ENCODE measurements at regions of chr1 and their contacts with region 1.

Region 1: DNA sequence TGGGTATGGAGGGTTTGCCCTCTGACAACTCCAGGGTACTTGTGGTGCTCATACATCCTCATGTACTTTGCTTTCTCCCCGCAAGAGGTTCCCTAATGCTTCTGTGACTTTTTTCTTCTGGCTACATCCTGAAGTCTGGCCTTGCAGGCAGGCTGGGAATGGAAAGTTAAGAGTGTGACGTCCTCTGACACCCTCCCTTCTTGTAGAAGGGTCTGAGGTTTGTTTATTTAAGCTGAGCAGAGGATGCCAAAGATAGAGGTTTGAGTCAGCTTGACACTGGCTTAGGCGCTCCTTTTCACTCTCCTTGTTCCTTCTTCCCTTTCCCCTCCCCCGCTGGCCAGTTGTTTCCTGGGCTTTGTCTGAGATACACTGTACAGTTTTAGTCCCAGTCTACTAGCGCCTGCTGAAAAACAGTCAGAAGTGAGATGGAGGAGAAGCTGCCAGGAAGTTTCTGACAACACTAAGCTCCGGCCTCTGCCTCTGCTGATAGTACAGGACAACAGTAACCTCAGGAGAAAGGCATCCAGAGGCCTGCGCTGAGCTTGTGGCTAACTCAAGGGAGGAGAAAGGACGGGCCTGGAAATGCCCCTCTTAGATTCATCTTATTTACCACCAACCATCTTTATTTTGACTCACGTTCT is at the start of gene MACF1:
- DNase-seq: peak in 3 of 35 experiments; percentile 6 to 52 (median 39)
- ATAC-seq: peak; percentile 18 to 47 (median 36)
- H3K4me3 ChIP-seq: peak within 1 kb of the TSS; percentile 51 to 65
- H3K4me3 Mint-ChIP-seq: peak within 1 kb of the TSS; percentile 93
- H3K27ac ChIP-seq: peak within 1 kb of the TSS; percentile 82
- H3K27ac Mint-ChIP-seq: peak within 1 kb of the TSS; percentile 95 to 98
- H3K4me1 ChIP-seq: peaks cover 21 to 27% of the 10 kb centered on the region in 2 experiments
- H3K4me1 Mint-ChIP-seq: peaks cover 65 to 74% (median 67%) of the 10 kb centered on the region in 3 donors
- H3K27me3 ChIP-seq: no peaks in the 10 kb centered on the region
- H3K27me3 Mint-ChIP-seq: no peaks in the 10 kb centered on the region
- total RNA-seq, gene MACF1: 232 to 596 (median 258) TPM

Region 2: DNA sequence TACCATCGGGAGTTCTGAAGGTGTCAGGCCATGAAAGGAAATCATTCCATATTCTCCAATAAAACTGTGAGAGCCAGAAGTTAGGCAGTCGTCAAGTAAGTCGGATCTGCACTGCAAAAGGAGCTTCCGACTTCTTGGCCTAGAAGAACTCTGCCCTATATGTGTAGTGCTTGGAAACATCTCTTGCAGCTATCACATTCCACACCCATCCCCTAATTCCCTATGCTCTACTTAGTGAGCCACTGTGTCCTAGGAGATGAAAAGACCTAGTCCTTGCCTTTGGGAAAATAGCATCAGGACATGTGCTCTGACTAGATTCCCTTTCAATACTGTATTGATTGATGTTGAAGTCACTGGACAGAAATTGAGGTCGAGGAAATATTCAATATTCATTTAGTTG is 315.0 kb before region 1 on chr1:
- CTCF ChIA-PET with region 1: no interaction called
- POLR2A ChIA-PET with region 1: no interaction called
- DNase-seq: no peak
- ATAC-seq: no peak
- H3K4me3 ChIP-seq: no peak overlapping the region
- H3K4me3 Mint-ChIP-seq: no peak overlapping the region
- H3K27ac ChIP-seq: no peak overlapping the region
- H3K27ac Mint-ChIP-seq: no peak overlapping the region
- H3K4me1 ChIP-seq: no peaks in the 10 kb centered on the region
- H3K4me1 Mint-ChIP-seq: peaks cover 0 to 7% (median 5%) of the 10 kb centered on the region in 3 donors
- H3K27me3 ChIP-seq: no peaks in the 10 kb centered on the region
- H3K27me3 Mint-ChIP-seq: no peaks in the 10 kb centered on the region

Region 3: GRCh38 chr1:39076127-39076798 is 128.3 kb before region 1 on chr1:
- CTCF ChIA-PET with region 1: no interaction called
- POLR2A ChIA-PET with region 1: no interaction called
- DNase-seq: no peak
- ATAC-seq: no peak
- H3K4me3 ChIP-seq: no peak overlapping the region
- H3K4me3 Mint-ChIP-seq: no peak overlapping the region
- H3K27ac ChIP-seq: no peak overlapping the region
- H3K27ac Mint-ChIP-seq: no peak overlapping the region
- H3K4me1 ChIP-seq: peaks cover 0 to 5% of the 10 kb centered on the region in 2 experiments
- H3K4me1 Mint-ChIP-seq: peaks cover 0 to 7% (median 6%) of the 10 kb centered on the region in 3 donors
- H3K27me3 ChIP-seq: peaks cover 6 to 13% of the 10 kb centered on the region in 2 experiments
- H3K27me3 Mint-ChIP-seq: peaks cover 10 to 12% of the 10 kb centered on the region in 2 donors

Region 4: DNA sequence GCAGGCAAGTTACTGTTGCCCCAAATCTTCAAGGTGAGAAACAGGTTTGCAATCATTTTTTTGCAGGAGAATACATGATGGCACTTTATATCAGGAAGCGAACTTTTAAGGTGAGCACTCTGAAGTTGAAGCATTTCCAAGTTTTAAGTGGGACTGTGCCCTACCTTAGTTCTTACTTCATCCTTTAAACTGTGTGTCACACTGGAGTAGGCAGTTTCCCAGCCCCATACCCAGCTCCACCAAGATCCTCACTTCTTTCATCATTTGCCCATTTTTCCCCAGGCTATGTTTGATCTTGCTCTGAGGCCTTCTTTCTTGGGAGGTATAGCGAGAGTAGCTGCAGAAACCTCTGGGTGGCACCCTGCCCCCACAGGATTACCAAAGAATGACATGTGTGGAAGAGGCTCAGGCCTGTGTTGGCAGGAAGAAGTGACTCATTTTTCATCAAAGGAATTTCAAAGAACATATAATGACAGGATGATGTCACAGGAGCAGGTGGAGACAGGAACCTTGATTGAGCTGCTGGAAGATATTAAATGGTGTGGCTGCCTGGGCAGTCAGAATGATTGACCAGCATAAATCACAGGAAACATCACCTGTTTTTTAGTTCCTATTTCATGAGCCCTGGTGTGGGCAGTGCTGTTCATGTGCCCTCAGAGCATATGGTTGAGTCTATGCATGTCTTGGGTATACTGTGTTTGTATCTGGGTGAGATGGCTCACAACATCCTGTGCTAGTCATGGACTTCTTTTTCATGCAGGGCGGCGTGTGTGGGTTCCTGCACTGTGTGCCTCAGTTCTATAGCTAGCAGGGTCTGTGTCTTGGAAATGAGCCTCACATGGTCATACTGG is 20.8 kb before region 1 on chr1:
- CTCF ChIA-PET with region 1: interaction called in 1 of 2 experiments, 10 read pairs
- POLR2A ChIA-PET with region 1: no interaction called
- DNase-seq: peak; percentile 63 to 90 (median 79)
- ATAC-seq: peak; percentile 89 to 93 (median 90)
- H3K4me3 ChIP-seq: no peak overlapping the region
- H3K4me3 Mint-ChIP-seq: peak overlapping the region in 2 of 3 donors; percentile 2 to 39
- H3K27ac ChIP-seq: peak overlapping the region; percentile 83
- H3K27ac Mint-ChIP-seq: peak overlapping the region; percentile 96
- H3K4me1 ChIP-seq: peaks cover 11 to 19% of the 10 kb centered on the region in 2 experiments
- H3K4me1 Mint-ChIP-seq: peaks cover 33 to 46% (median 46%) of the 10 kb centered on the region in 3 donors
- H3K27me3 ChIP-seq: no peaks in the 10 kb centered on the region
- H3K27me3 Mint-ChIP-seq: no peaks in the 10 kb centered on the region

Region 5: DNA sequence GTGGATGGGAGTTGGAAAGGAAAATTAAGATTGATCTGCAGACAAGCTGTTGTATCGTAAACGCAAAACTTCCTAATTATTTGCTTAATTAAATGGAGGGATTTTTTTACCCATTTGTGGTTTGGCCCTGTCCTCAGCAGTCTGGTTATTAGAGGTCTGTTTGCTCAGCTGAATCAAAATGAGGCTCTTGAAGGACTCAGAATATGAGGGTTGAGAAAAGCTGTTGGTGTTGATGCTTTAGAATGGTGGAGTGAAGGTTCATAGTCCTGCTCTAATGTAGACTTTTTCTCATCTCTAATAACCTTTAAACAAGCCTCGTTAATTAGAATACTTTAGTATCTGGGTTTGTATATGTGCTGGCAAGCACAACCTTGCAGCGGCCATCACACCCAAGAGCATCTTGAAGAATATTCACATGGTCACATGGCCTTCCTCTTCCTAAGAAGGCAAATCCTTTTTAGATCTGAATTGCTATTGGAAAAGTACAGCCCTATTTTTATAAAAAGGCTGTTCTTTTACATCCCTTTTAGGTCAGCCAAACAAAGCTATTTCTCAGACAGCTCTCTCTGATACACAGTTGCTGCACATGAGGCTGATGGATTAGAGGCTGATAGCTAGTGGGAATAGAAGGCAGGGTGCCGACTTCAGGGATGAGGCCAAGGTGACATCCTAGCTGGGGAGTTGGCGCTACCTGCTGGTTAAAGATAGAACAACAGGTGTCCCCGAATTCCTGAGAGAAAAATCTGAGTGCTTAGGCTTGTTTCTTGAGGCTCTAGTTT is 53.8 kb after region 1 on chr1:
- CTCF ChIA-PET with region 1: interaction called in 1 of 2 experiments, 16 read pairs
- POLR2A ChIA-PET with region 1: no interaction called
- DNase-seq: peak; percentile 8 to 84 (median 52)
- ATAC-seq: peak; percentile 66 to 70 (median 68)
- H3K4me3 ChIP-seq: no peak overlapping the region
- H3K4me3 Mint-ChIP-seq: no peak overlapping the region
- H3K27ac ChIP-seq: peak overlapping the region; percentile 33
- H3K27ac Mint-ChIP-seq: peak overlapping the region in 1 of 2 donors; percentile 80
- H3K4me1 ChIP-seq: peaks cover 9 to 10% of the 10 kb centered on the region in 2 experiments
- H3K4me1 Mint-ChIP-seq: peaks cover 25 to 42% (median 33%) of the 10 kb centered on the region in 3 donors
- H3K27me3 ChIP-seq: no peaks in the 10 kb centered on the region
- H3K27me3 Mint-ChIP-seq: no peaks in the 10 kb centered on the region

Region 6: DNA sequence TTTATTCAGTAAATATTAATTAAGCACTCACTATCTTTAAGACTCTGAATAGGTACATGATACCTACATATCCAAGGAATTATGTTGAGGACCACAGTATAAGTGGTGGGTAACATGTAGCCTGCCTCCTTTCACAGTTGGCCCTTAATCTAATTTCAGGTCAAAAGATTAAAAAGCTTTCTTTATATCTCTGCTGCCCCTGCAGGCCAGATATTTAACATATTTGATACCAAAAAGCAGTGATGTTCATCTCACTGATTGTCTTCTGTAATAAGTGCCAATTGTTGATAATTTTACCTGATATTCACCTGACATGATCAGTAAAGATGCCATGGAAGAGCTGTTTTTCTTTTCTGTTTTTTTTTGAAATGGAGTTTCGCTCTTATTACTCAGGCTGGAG is 993.1 kb after region 1 on chr1:
- CTCF ChIA-PET with region 1: no interaction called
- POLR2A ChIA-PET with region 1: interaction called in 1 of 2 experiments, 10 read pairs
- DNase-seq: peak in 2 of 35 experiments; percentile 11 to 26
- ATAC-seq: no peak
- H3K4me3 ChIP-seq: no peak overlapping the region
- H3K4me3 Mint-ChIP-seq: no peak overlapping the region
- H3K27ac ChIP-seq: no peak overlapping the region
- H3K27ac Mint-ChIP-seq: no peak overlapping the region
- H3K4me1 ChIP-seq: no peaks in the 10 kb centered on the region
- H3K4me1 Mint-ChIP-seq: peaks cover 0 to 3% (median 0%) of the 10 kb centered on the region in 3 donors
- H3K27me3 ChIP-seq: no peaks in the 10 kb centered on the region
- H3K27me3 Mint-ChIP-seq: no peaks in the 10 kb centered on the region

Region 7: DNA sequence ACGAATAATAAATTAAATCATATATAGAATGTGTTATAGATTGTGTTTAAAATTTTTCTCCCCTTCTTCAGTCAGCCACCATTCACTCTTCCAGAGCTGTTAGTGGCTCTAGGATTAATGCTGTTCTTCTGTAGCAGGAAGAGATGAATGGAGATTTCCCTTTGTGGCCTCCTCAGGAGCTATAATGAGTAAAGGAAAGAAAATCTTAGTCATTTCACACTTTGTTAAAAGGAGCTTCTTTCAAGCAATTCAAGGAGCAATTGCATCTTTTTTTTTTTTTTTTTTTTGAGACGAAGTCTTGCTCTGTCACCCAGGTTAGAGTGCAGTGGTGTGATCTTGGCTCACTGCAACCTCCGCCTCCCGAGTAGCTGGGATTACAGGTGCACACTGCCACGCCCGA is 1019.5 kb after region 1 on chr1:
- CTCF ChIA-PET with region 1: no interaction called
- POLR2A ChIA-PET with region 1: no interaction called
- DNase-seq: no peak
- ATAC-seq: no peak
- H3K4me3 ChIP-seq: no peak overlapping the region
- H3K4me3 Mint-ChIP-seq: no peak overlapping the region
- H3K27ac ChIP-seq: no peak overlapping the region
- H3K27ac Mint-ChIP-seq: no peak overlapping the region
- H3K4me1 ChIP-seq: no peaks in the 10 kb centered on the region
- H3K4me1 Mint-ChIP-seq: peaks cover 5 to 10% (median 8%) of the 10 kb centered on the region in 3 donors
- H3K27me3 ChIP-seq: no peaks in the 10 kb centered on the region
- H3K27me3 Mint-ChIP-seq: no peaks in the 10 kb centered on the region